GM10248 (cell line): ENCODE measurements at regions of chr9 and their contacts with region 1.

Region 1: GRCh38 chr9:68966496-68966944 is 47.4 kb downstream of the PRKACG start:
- DNase-seq: peak; percentile 59
- CTCF ChIP-seq: no peak

Region 2: GRCh38 chr9:68949271-68950000 is 17.1 kb before region 1 on chr9:
- CTCF ChIA-PET with region 1: interaction called, 44 read pairs
- POLR2A ChIA-PET with region 1: interaction called, 3 read pairs
- DNase-seq: no peak
- CTCF ChIP-seq: peak; percentile 58

Region 3: DNA sequence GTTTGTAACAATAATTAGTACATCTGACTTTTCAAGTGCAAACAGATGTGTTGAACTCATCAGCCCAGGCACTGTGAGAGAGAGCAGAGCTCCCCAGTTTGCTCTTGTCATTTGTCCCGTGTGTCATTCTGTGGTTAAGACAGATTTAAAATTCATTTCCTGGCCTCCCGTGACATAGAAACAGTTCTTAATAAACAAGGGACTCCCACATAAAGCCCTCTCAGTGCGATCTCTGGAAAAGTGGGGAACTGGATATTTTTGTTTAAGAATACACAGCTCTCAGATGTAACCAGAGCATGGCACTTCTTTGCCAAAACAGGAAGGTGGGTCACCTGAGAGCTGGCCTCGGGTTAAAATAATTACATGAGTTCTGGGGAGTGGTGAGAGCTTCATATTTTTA is 11.2 kb before region 1 on chr9:
- CTCF ChIA-PET with region 1: interaction called, 44 read pairs
- POLR2A ChIA-PET with region 1: no interaction called
- DNase-seq: no peak
- CTCF ChIP-seq: no peak

Region 4: DNA sequence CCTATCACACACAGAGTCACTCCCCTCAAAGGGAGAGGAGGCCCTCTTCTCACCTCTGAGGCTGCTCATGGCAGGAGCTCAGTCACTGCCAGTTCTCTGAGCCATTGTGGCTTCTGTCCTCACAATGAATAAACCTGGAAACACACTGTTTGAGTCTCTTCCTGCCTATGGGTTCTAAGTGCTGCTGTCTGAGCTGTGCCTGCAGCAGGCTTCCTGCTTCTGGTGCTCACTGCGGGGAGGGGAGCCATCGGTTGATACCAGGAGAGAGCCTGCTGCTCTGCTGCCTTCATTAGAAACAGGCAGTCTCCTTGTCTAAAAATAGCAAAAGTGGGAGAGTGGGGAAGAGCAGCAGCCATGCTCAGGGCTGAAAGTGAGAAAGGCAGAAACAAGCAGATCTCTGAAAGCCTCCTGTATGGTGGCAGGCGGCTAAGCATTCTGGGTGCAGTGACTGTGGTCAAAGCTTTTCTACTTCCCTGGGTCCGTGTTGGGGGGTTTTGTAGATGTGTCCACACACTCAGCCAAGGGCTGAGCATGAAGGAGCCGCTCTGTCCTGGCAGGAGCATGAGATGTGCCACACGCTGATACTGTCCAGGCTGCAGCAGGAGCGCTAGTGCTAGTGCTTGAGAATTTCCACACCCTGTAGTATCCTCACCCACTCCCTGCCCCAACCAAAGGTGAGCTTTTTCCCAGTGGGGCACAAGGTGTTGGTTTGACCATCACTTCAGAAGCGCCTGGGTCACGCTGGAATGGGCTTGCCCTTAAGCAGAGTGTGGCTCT is 13.2 kb after region 1 on chr9:
- CTCF ChIA-PET with region 1: interaction called, 23 read pairs
- POLR2A ChIA-PET with region 1: interaction called, 9 read pairs
- DNase-seq: no peak
- CTCF ChIP-seq: no peak